MCF 10A (cell line): ENCODE measurements at regions of chr17 and their contacts with region 1.

Region 1: GRCh38 chr17:72592242-72592966 is 471.6 kb downstream of the SOX9 start:
- DNase-seq: peak; percentile 86
- H3K4me3 Mint-ChIP-seq: peak overlapping the region; percentile 91
- H3K27ac Mint-ChIP-seq: peak overlapping the region; percentile 90
- H3K4me1 Mint-ChIP-seq: peaks cover 11% of the 10 kb centered on the region
- H3K27me3 Mint-ChIP-seq: no peaks in the 10 kb centered on the region
- CTCF ChIP-seq: no peak

Region 2: DNA sequence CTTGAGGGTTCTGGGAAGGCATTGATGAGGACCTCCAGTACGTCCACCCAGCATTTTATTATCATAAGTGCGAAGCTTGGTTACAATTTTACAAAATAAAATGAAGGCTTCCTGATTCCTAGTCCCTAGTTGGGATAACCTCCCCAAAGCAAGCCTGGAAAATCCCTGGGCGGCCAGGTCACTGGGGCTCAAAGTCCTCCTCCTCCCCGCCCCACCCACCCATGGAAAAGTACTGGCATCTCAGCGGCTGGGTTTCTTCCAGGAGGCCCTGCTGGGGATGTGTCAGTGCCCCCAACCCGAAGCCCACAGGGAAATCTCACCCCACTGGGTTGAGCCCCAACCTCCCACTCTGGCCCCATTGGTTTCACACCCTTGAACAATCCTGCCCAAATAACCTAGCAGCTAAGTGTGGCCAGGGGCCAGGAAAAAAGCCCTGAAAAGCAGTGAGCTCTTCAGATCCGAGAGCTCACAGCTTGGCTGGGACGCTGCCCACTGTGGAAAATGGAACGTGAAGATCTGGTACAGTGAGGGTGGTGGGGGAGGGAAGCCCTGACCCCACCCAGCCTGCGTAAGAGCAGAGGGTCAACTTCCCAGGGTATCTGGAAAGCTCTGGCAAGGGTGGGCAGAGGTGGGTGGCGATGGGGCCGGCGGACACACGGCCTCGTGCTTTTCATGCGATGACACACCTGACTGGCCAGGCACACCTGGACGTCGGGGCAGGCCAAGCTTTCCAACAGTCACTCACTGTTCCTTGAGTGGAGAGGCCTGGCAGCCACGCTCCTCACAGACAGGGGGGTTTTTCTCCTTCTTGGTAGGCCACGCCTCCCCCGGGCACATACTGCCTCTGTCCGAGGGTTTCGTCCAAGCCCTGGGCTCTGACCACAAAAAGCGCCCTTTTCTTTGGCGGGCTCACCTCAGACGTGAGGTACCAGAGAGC is 147.1 kb before region 1 on chr17:
- CTCF ChIA-PET with region 1: no interaction called
- POLR2A ChIA-PET with region 1: no interaction called
- intact Hi-C with region 1: no loop called
- DNase-seq: no peak
- H3K4me3 Mint-ChIP-seq: no peak overlapping the region
- H3K27ac Mint-ChIP-seq: no peak overlapping the region
- H3K4me1 Mint-ChIP-seq: peaks cover 7% of the 10 kb centered on the region
- H3K27me3 Mint-ChIP-seq: no peaks in the 10 kb centered on the region
- CTCF ChIP-seq: no peak

Region 3: GRCh38 chr17:72580321-72581127 is 11.9 kb before region 1 on chr17:
- CTCF ChIA-PET with region 1: interaction called, 4 read pairs
- POLR2A ChIA-PET with region 1: interaction called, 20 read pairs
- intact Hi-C with region 1: no loop called
- DNase-seq: peak; percentile 47
- H3K4me3 Mint-ChIP-seq: no peak overlapping the region
- H3K27ac Mint-ChIP-seq: peak overlapping the region; percentile 19
- H3K4me1 Mint-ChIP-seq: peaks cover 40% of the 10 kb centered on the region
- H3K27me3 Mint-ChIP-seq: no peaks in the 10 kb centered on the region
- CTCF ChIP-seq: no peak

Region 4: GRCh38 chr17:72614871-72615626 is 22.6 kb after region 1 on chr17:
- CTCF ChIA-PET with region 1: interaction called, 4 read pairs
- POLR2A ChIA-PET with region 1: interaction called, 166 read pairs
- intact Hi-C with region 1: no loop called
- DNase-seq: no peak
- H3K4me3 Mint-ChIP-seq: peak overlapping the region; percentile 29
- H3K27ac Mint-ChIP-seq: peak overlapping the region; percentile 73
- H3K4me1 Mint-ChIP-seq: peaks cover 34% of the 10 kb centered on the region
- H3K27me3 Mint-ChIP-seq: no peaks in the 10 kb centered on the region
- CTCF ChIP-seq: no peak

Region 5: GRCh38 chr17:72683506-72684404 is 91.4 kb after region 1 on chr17:
- CTCF ChIA-PET with region 1: no interaction called
- POLR2A ChIA-PET with region 1: interaction called, 33 read pairs
- intact Hi-C with region 1: no loop called
- DNase-seq: peak; percentile 98
- H3K4me3 Mint-ChIP-seq: peak overlapping the region; percentile 24
- H3K27ac Mint-ChIP-seq: peak overlapping the region; percentile 92
- H3K4me1 Mint-ChIP-seq: peaks cover 42% of the 10 kb centered on the region
- H3K27me3 Mint-ChIP-seq: no peaks in the 10 kb centered on the region
- CTCF ChIP-seq: no peak

Region 6: DNA sequence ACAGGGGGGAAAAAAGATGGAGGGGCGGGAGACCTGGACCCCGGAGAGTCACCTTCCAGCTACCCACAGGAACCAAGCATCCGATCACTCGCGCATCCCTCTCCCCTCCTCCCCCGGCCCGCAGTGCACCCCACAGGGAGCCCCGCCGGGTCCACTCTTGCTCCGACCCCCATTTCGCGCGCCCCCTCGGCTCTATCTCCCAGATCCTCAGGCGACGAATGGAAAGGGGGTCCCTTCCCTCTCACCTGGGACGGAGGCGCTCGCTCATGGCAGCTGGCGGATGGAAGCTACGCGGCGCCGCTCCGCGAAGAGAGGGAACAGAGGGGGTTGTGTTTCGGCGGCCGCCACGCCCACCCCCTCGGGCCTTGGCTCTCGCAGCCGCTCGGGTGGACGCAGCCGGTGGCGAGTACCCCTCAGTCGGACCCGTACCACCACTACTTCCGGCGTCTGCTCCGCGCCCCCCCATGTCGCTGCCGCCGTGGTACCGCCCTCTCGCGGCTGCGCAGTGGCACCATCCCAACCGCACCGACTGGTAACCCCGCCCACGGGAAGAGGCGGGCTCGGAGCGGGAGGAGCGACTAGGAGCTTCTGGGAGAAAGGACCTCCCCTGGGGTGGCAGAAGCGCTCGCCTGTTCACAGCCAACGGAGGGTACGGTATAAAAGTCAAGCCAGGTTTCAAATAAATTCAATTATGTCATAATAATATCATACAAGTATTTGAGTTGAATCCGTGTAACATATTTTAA is 639.6 kb after region 1 on chr17:
- CTCF ChIA-PET with region 1: no interaction called
- POLR2A ChIA-PET with region 1: interaction called, 25 read pairs
- intact Hi-C with region 1: no loop called
- DNase-seq: peak; percentile 93
- H3K4me3 Mint-ChIP-seq: peak overlapping the region; percentile 97
- H3K27ac Mint-ChIP-seq: peak overlapping the region; percentile 90
- H3K4me1 Mint-ChIP-seq: peaks cover 28% of the 10 kb centered on the region
- H3K27me3 Mint-ChIP-seq: no peaks in the 10 kb centered on the region
- CTCF ChIP-seq: no peak